ENCODE measurements at regions of chrX and their contacts with region 1.

Region 1: DNA sequence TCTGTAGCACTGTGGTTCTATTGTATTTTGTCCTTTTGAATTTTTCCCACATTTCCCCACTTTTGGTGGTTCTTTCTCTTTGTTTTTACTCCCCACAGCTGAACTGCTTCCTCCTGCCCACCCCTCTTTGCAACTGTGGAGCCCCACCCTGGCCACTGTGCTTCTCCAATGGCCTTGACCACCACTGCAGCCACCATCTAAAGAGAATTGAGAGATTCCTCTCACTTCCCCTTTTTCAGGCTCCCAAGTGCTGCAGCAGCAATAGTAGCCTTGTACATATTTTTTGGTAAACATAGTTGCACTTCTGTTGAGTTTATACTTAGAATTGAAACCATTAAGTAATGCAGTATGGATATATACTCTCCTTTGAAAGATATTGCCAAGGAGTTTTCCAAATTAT is 51.3 kb upstream of the FRMPD3 start:
- DNase-seq: no peak
- ATAC-seq: no peak
- H3K4me3 ChIP-seq: no peak overlapping the region
- H3K27ac ChIP-seq: no peak overlapping the region
- H3K4me1 ChIP-seq: no peaks in the 10 kb centered on the region
- H3K27me3 ChIP-seq: no peaks in the 10 kb centered on the region
- CTCF ChIP-seq: no peak
- EP300 ChIP-seq: no peak
- POLR2A ChIP-seq: no peak
- RAD21 ChIP-seq: no peak

Region 2: GRCh38 chrX:107384407-107385105 is 13.6 kb before region 1 on chrX:
- CTCF ChIA-PET with region 1: no interaction called
- POLR2A ChIA-PET with region 1: no interaction called
- in situ Hi-C with region 1: no loop called
- intact Hi-C with region 1: loop called (anchors 1 kb)
- DNase-seq: no peak
- ATAC-seq: no peak
- H3K4me3 ChIP-seq: no peak overlapping the region
- H3K27ac ChIP-seq: no peak overlapping the region
- H3K4me1 ChIP-seq: no peaks in the 10 kb centered on the region
- H3K27me3 ChIP-seq: no peaks in the 10 kb centered on the region; a peak in 1 of 5 replicates
- CTCF ChIP-seq: no peak
- EP300 ChIP-seq: no peak
- POLR2A ChIP-seq: no peak
- RAD21 ChIP-seq: no peak

Region 3: GRCh38 chrX:107627838-107628661 is 229.9 kb after region 1 on chrX and contains the start of gene PRPS1:
- CTCF ChIA-PET with region 1: no interaction called
- POLR2A ChIA-PET with region 1: no interaction called
- in situ Hi-C with region 1: no loop called
- intact Hi-C with region 1: no loop called
- DNase-seq: peak; percentile 89
- ATAC-seq: peak; percentile 99
- H3K4me3 ChIP-seq: peak within 1 kb of the TSS; percentile 63 to 82 (median 78)
- H3K27ac ChIP-seq: peak within 1 kb of the TSS; percentile 74
- H3K4me1 ChIP-seq: peaks cover 30% of the 10 kb centered on the region
- H3K27me3 ChIP-seq: no peaks in the 10 kb centered on the region; a peak in 1 of 5 replicates
- CTCF ChIP-seq: no peak
- EP300 ChIP-seq: no peak
- POLR2A ChIP-seq: peak; percentile 58 to 60; a peak in 3 of 4 replicates
- RAD21 ChIP-seq: no peak
- total RNA-seq, gene PRPS1: 54.4 and 80.5 TPM in 2 replicates